Gastrocnemius medialis (tissue), 4 donors: ENCODE measurements at regions of chr3 and their contacts with region 1.

Region 1: DNA sequence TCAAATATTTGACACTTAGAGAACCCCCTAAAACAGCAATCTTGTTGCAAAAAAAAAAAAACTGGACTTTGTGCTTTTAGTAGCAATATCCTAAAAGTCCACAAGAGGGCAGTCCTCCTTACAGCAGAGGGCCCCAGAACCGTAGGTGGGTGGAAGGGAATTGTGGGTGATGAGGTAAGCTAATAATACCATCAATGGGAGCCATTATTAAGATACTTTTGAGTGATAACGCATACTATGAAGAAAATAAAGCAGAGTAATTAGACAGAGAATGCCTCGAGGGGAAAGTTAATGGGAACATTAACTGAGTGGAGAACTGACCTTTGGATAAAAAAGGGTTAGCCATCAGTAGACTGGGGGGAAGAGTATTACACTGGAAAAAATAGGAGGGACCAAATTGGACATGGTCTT is 229.9 kb downstream of the THRB start:
- DNase-seq: no peak
- ATAC-seq: no peak
- H3K4me3 ChIP-seq: no peak overlapping the region
- H3K27ac ChIP-seq: no peak overlapping the region
- H3K4me1 ChIP-seq: peaks cover 22 to 57% of the 10 kb centered on the region in 2 donors
- H3K27me3 ChIP-seq: no peaks in the 10 kb centered on the region
- CTCF ChIP-seq: peak; percentile 64 to 79 (median 75)
- POLR2A ChIP-seq: no peak

Region 2: GRCh38 chr3:24128195-24129005 is 136.4 kb before region 1 on chr3:
- in situ Hi-C with region 1: no loop called
- intact Hi-C with region 1: no loop called
- DNase-seq: peak in 1 of 2 donors; percentile 45
- ATAC-seq: peak; percentile 59 to 87
- H3K4me3 ChIP-seq: no peak overlapping the region
- H3K27ac ChIP-seq: peak overlapping the region; percentile 8 to 57 (median 43)
- H3K4me1 ChIP-seq: peaks cover 14 to 18% of the 10 kb centered on the region in 2 donors
- H3K27me3 ChIP-seq: no peaks in the 10 kb centered on the region
- CTCF ChIP-seq: no peak
- POLR2A ChIP-seq: no peak

Region 3: DNA sequence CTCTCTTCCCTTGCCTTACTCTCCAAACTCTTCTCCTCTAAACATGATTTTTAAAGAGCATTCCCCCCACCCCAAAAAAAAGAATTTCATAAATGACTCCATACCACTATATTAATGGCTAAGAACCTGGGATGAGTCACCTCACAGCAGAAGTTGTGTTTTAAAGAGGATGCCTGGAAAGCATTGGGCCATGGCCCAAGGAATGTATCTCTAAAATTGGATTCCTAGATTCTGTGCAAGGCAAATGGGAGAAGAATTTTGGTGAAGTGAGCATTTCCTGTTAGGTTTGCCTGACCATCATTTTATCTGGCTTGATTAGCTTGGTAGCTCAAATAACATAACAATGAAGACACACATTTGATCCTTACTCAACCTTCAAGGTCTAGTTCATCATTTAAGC is 68.2 kb before region 1 on chr3:
- in situ Hi-C with region 1: no loop called
- intact Hi-C with region 1: loop called (anchors 5 kb)
- DNase-seq: no peak
- ATAC-seq: no peak
- H3K4me3 ChIP-seq: no peak overlapping the region
- H3K27ac ChIP-seq: peak overlapping the region; percentile 82 to 88 (median 86)
- H3K4me1 ChIP-seq: peaks cover 51 to 73% of the 10 kb centered on the region in 2 donors
- H3K27me3 ChIP-seq: no peaks in the 10 kb centered on the region
- CTCF ChIP-seq: no peak
- POLR2A ChIP-seq: no peak

Region 4: DNA sequence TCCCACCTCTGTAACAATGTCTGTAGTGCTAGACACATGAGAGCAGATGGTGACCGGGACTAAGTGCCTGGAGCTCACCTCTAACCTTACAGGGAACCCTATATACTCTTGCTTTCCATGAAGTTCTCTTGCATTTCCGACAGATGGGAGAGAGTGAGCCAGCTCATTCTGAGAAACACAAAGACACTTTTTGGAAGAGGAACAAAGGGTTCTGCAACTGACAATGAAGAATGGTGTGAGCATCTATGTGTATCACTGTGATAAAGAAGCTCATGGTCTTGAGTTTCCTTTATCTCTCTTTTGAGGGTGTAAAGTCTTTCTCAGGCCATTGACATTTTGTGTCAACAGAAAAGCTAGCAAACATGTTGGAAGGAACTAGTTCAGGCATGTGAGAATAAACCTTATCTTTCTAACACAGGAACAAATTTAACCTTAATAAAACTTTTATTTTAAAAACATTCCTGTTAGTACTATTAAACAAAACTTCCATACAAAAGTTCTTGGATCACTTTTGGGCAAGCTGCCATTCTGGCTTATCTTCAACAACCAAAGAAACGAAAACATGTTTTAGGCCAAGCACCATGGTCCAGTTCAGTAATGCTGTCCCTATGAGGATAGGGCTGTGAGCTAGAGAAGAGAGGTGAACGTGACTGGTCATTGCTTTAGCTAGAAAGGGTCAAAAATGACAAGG is 87.2 kb after region 1 on chr3:
- in situ Hi-C with region 1: no loop called
- intact Hi-C with region 1: loop called (anchors 5 kb)
- DNase-seq: peak in 1 of 2 donors; percentile 12
- ATAC-seq: peak; percentile 64 to 65
- H3K4me3 ChIP-seq: no peak overlapping the region
- H3K27ac ChIP-seq: peak overlapping the region; percentile 28 to 61 (median 38)
- H3K4me1 ChIP-seq: peaks cover 32 to 33% of the 10 kb centered on the region in 2 donors
- H3K27me3 ChIP-seq: no peaks in the 10 kb centered on the region
- CTCF ChIP-seq: no peak
- POLR2A ChIP-seq: no peak

Region 5: DNA sequence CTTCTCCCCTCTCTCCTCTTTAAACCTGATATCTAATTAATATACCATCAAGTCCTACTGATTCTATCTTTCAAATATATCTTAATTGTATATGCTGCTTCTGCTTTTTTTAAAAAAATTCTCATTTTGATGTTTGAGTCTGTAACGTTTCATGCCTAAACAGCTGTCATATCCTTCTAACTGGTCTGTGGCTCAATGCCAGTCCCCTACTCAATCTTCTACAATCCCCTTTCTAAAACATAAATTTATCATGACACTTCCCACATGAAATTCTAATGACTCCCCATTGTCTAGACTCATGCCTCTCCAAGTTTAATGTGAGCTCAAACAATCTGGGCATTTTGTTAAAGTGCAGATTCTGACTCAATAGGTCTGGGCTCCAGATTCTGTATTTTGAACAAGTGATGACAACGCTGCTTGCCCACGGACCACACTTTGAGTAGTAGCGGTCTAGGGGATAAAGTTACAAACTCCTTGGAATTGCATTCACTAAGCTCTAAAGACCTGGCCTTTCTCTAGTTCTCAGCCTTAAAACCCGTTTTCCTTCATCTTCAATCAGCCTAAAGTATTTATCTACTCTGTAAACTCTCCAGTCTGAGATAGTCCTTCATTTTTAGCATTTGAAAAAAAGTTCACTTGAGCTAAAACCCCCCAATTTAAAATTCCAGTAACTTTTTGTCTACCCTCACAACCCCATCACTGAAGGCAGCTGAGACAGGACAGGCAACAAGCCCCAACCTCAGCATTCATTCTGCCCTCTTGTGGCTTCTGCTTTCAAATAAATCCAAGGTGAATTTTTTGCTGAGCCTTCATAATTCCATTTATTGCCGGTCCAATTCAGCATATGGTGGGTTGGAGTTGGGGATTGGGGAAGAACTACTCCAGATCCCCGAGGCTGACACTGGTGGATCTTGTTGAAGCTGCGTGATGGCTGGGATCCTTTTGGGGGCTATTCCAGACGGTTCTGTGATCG is 318.0 kb after region 1 on chr3:
- in situ Hi-C with region 1: loop called in 1 of 4 experiments (anchors 10 kb)
- intact Hi-C with region 1: loop called (anchors 10 kb)
- DNase-seq: peak; percentile 6 to 14
- ATAC-seq: peak; percentile 73 to 79
- H3K4me3 ChIP-seq: no peak overlapping the region
- H3K27ac ChIP-seq: no peak overlapping the region
- H3K4me1 ChIP-seq: peaks cover 0 to 6% of the 10 kb centered on the region in 2 donors
- H3K27me3 ChIP-seq: no peaks in the 10 kb centered on the region
- CTCF ChIP-seq: peak; percentile 20 to 53 (median 41)
- POLR2A ChIP-seq: no peak

Region 6: DNA sequence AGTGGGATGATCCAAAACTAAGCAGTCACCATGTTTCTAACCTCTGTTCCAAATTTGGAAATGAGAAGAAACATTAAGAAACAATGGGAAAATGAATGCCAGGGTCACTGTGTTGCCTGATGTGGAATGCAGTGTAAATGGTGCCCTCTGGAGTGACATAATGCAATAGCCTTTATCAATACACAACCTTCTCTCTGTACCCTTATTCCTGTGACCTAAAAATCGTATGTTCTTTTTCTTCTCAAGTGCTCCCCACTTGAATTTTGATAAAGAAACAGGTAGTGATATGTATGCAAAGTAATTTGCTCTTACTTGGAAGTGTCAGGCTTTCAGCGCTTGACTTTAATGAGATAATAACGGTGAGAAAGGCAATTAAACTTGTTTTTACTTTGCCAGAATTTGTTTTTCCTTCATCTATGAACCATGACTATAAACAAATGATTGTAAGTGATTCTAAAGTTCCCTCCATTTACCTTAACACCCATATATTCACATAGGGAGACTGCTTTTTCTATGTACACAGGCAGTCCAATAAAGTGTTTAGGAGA is 375.7 kb after region 1 on chr3:
- in situ Hi-C with region 1: no loop called
- intact Hi-C with region 1: loop called (anchors 5 kb)
- DNase-seq: no peak
- ATAC-seq: peak; percentile 72 to 77
- H3K4me3 ChIP-seq: no peak overlapping the region
- H3K27ac ChIP-seq: no peak overlapping the region
- H3K4me1 ChIP-seq: no peaks in the 10 kb centered on the region
- H3K27me3 ChIP-seq: no peaks in the 10 kb centered on the region
- CTCF ChIP-seq: peak in 3 of 5 experiments; percentile 11 to 26 (median 15)
- POLR2A ChIP-seq: no peak

Region 7: DNA sequence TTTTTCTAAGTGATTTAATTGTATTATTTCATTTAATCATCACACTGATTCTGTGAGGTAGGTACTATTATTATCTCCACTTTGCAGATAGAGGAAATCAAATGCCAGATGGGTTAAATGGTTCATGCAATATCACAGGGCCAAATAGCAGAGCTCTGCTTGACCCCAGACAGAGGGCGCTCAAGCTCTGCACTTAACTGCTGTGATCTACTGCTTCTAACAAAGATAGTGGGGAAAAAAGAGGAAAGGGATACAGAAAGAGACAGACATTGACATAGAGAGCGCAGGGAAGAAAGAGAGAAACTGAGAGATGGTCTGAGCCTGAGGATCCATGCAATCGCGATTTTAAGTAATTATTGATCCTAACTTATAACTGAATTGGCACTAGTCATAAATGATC is 509.0 kb after region 1 on chr3:
- in situ Hi-C with region 1: no loop called
- intact Hi-C with region 1: no loop called
- DNase-seq: no peak
- ATAC-seq: peak; percentile 61 to 62
- H3K4me3 ChIP-seq: no peak overlapping the region
- H3K27ac ChIP-seq: no peak overlapping the region
- H3K4me1 ChIP-seq: no peaks in the 10 kb centered on the region
- H3K27me3 ChIP-seq: no peaks in the 10 kb centered on the region
- CTCF ChIP-seq: peak; percentile 37 to 72 (median 66)
- POLR2A ChIP-seq: no peak